ENCODE measurements at regions of chr15 and their contacts with region 1.

Region 1: DNA sequence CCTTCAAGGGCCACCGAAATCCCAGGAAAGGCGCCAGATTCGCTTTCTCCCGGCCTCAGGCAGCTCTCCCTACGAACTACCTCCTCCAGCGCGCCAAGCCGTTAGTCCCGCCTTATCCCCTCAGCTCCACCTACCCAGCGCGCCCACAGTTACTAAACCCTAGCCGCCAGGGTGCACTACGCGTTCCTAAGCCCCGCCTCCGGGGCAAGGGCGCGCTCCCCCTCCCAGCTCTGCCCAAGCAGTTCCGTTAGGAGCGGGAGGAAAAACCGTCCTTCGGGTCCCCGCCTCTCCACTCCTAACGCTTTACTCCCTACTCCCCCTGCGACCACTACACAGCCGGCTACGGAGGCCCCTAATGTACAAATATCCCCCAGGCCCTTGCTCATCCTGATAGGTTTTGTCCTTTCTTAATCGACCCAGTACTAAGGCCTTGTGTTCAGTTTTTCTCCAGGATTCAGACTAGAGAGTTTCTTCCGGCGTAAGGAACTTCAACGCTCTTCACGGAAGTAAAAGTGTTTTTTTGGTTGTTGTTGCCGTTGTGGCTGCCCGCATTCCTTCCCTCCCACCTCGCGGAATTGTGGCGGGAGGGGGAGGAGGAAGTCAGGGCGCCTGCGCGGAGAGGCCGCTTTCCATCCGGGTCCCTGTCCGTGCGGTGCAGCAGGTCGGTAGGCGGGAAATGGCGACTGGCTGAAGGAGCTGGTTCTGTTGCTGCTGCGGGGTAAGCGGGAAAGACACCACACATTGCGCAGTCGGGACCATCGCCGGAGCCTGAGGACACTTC is at the start of gene CTDSPL2:
- DNase-seq: peak; percentile 87 to 98 (median 94)
- ATAC-seq: peak; percentile 98
- H3K4me3 ChIP-seq: peak within 1 kb of the TSS; percentile 94
- H3K4me3 Mint-ChIP-seq: peak within 1 kb of the TSS; percentile 95 to 99 (median 98)
- H3K27ac ChIP-seq: peak within 1 kb of the TSS; percentile 94
- H3K27ac Mint-ChIP-seq: peak within 1 kb of the TSS; percentile 98 to 100 (median 99)
- H3K4me1 ChIP-seq: peaks cover 10% of the 10 kb centered on the region in 2 donors
- H3K4me1 Mint-ChIP-seq: peaks cover 35 to 65% (median 51%) of the 10 kb centered on the region in 7 donors
- H3K27me3 ChIP-seq: no peaks in the 10 kb centered on the region
- H3K27me3 Mint-ChIP-seq: peaks cover 0 to 2% (median 0%) of the 10 kb centered on the region in 5 donors
- total RNA-seq, gene CTDSPL2: 60.3 to 81.8 (median 77.3) TPM

Region 2: DNA sequence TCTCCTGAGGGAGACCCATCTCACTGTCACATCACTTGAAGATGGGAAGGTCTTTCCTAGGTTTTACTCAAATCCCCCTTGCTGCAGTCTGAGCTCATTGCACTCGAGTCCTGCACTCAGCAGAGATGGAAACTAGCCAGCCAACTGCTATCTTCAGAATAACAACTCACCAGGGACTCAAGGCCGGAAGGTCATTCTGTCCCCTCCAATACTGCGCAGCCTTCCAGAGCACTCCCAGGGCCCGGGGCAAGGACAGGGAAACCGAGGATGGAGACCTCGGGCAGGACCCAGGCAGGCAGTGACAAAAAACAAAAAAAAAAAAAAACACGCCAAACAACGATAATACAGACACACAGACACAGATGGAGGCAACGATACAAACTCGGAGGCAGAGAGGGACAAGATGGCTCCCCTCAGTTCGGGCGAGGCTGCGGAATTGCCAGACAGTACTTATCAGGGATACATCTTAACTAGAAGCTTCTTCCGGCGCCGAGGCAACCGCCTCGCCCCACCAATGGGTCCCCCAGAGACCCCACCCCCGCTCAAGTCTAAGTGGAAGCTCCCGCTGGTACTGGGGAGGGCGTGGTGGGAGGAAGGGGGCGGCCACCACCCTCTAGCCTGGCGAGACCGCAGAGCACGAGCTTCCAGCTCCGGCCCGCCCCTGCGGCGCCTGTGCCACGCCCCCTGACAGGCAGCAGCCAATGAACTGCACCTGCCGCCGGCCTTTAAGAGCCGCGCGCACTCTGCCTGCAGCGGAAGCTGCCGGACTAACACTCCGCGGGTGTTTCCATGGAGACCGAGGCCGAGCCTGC is 916.8 kb before region 1 on chr15:
- CTCF ChIA-PET with region 1: no interaction called
- POLR2A ChIA-PET with region 1: no interaction called
- intact Hi-C with region 1: loop called in 1 of 2 experiments (anchors 5 kb)
- DNase-seq: peak; percentile 91 to 96 (median 94)
- ATAC-seq: peak; percentile 97
- H3K4me3 ChIP-seq: peak overlapping the region; percentile 88
- H3K4me3 Mint-ChIP-seq: peak overlapping the region; percentile 89 to 100 (median 94)
- H3K27ac ChIP-seq: peak overlapping the region; percentile 76
- H3K27ac Mint-ChIP-seq: peak overlapping the region; percentile 92 to 99 (median 97)
- H3K4me1 ChIP-seq: peaks cover 14 to 17% of the 10 kb centered on the region in 2 donors
- H3K4me1 Mint-ChIP-seq: peaks cover 14 to 51% (median 28%) of the 10 kb centered on the region in 7 donors
- H3K27me3 ChIP-seq: no peaks in the 10 kb centered on the region
- H3K27me3 Mint-ChIP-seq: peaks cover 0 to 2% (median under 1%) of the 10 kb centered on the region in 5 donors

Region 3: DNA sequence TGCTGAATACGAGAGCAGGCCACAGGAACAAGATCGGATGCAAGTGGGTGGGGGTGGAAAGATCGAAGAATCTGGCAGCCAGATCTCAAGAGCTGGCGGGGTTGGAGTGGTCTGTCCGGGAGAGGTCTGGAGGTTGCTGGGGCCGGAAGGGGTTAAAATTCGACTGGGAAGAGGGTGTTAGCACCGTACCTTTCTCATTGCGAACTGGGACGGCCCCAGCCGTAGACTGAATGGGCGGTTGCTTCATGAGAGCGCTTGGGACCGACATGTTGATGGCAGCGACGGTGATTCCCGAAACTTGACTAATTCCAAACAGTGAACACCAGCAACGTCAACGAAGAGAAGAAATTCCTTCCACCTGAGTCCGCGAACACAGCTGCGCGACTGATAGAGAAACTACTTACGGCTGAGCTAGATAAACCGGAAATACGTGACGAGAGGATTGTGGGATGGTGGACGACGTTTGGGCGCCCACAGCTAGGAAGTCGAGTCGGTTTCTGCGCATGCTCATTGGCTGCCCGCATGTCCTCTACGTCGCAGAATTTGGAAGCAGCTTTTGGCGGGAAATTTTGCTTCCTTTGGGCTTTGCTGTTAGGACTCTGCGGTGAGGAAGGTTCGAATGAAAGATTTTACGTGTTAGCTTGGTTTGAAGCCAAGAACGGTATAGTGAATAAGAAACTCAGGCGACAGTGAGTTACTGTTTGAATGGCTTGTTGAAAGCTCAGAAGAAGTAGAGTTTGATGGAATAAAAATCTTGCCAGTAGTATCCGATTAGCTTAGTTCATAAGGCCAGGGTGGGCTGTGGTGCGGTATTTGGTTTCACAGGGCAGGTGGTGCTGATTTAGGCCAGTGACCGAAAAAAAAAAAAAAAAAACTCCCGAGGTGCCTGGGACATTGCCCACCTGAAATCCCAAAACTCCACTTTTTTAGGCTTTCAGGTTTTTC is 602.6 kb before region 1 on chr15 and contains the start of gene MFAP1:
- CTCF ChIA-PET with region 1: no interaction called
- POLR2A ChIA-PET with region 1: no interaction called
- intact Hi-C with region 1: loop called (anchors 1 to 2 kb)
- DNase-seq: peak; percentile 63 to 94 (median 89)
- ATAC-seq: peak; percentile 94
- H3K4me3 ChIP-seq: peak within 1 kb of the TSS; percentile 100
- H3K4me3 Mint-ChIP-seq: peak within 1 kb of the TSS; percentile 94 to 100 (median 98)
- H3K27ac ChIP-seq: peak within 1 kb of the TSS; percentile 97
- H3K27ac Mint-ChIP-seq: peak within 1 kb of the TSS; percentile 95 to 99 (median 98)
- H3K4me1 ChIP-seq: peaks cover 32 to 34% of the 10 kb centered on the region in 2 donors
- H3K4me1 Mint-ChIP-seq: peaks cover 37 to 81% (median 53%) of the 10 kb centered on the region in 7 donors
- H3K27me3 ChIP-seq: no peaks in the 10 kb centered on the region
- H3K27me3 Mint-ChIP-seq: no peaks in the 10 kb centered on the region
- total RNA-seq, gene MFAP1: 8.5 to 37.3 (median 21.8) TPM

Region 4: GRCh38 chr15:43977072-43977884 is 449.9 kb before region 1 on chr15:
- CTCF ChIA-PET with region 1: no interaction called
- POLR2A ChIA-PET with region 1: no interaction called
- intact Hi-C with region 1: no loop called
- DNase-seq: peak in 1 of 9 donors; percentile 69
- ATAC-seq: no peak
- H3K4me3 ChIP-seq: no peak overlapping the region
- H3K4me3 Mint-ChIP-seq: peak overlapping the region in 2 of 10 donors; percentile 12 to 29
- H3K27ac ChIP-seq: no peak overlapping the region
- H3K27ac Mint-ChIP-seq: peak overlapping the region in 1 of 9 donors; percentile 71
- H3K4me1 ChIP-seq: no peaks in the 10 kb centered on the region
- H3K4me1 Mint-ChIP-seq: peaks cover 0 to 31% (median 8%) of the 10 kb centered on the region in 7 donors
- H3K27me3 ChIP-seq: no peaks in the 10 kb centered on the region
- H3K27me3 Mint-ChIP-seq: peaks cover 9 to 29% (median 15%) of the 10 kb centered on the region in 5 donors

Region 5: GRCh38 chr15:44286814-44287452 is 140.2 kb before region 1 on chr15:
- CTCF ChIA-PET with region 1: interaction called, 4 read pairs
- POLR2A ChIA-PET with region 1: interaction called, 34 read pairs
- intact Hi-C with region 1: loop called (anchors 1 kb)
- DNase-seq: peak in 4 of 9 donors; percentile 9 to 30 (median 19)
- ATAC-seq: no peak
- H3K4me3 ChIP-seq: peak overlapping the region; percentile 85
- H3K4me3 Mint-ChIP-seq: peak overlapping the region; percentile 90 to 99 (median 96)
- H3K27ac ChIP-seq: peak overlapping the region; percentile 86
- H3K27ac Mint-ChIP-seq: peak overlapping the region; percentile 95 to 100 (median 99)
- H3K4me1 ChIP-seq: peaks cover 12 to 13% of the 10 kb centered on the region in 2 donors
- H3K4me1 Mint-ChIP-seq: peaks cover 30 to 50% (median 45%) of the 10 kb centered on the region in 7 donors
- H3K27me3 ChIP-seq: no peaks in the 10 kb centered on the region
- H3K27me3 Mint-ChIP-seq: peaks cover 0 to 17% (median 3%) of the 10 kb centered on the region in 5 donors

Region 6: DNA sequence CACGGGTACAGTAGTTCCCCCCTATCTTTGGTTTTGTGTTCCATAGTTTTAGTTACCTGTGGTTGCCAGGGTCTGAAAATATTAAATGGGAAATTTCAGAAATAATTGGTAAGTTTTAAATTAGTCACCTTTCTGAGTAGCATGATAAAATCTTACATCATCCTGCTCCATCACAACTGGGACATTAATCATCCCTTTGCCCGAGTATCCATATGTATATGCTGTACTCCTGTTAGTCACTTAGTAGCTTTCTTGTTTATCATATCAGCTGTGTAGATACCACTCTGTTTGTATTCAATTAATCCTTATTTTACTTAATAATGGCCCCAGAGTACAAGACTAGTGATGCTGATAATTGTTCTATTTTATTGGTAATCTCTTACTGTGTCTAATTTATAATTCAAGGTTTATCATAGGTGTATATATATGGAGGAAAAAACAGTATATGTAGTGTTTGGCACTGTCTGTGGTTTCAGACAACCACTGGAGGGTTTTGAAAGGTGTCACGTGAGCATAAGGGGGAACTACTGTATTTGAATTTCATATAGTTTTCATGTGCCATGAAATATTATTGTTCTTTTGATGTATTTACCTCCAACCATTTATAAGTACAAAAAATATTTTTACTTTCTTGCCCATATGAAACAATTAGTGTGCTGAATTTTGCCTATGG is 41.7 kb after region 1 on chr15:
- CTCF ChIA-PET with region 1: no interaction called
- POLR2A ChIA-PET with region 1: interaction called, 3 read pairs
- intact Hi-C with region 1: loop called in 1 of 2 experiments (anchors 5 kb)
- DNase-seq: no peak
- ATAC-seq: peak; percentile 32
- H3K4me3 ChIP-seq: no peak overlapping the region
- H3K4me3 Mint-ChIP-seq: peak overlapping the region in 1 of 10 donors; percentile 5
- H3K27ac ChIP-seq: no peak overlapping the region
- H3K27ac Mint-ChIP-seq: no peak overlapping the region
- H3K4me1 ChIP-seq: peaks cover 0 to 9% of the 10 kb centered on the region in 2 donors
- H3K4me1 Mint-ChIP-seq: peaks cover 11 to 37% (median 24%) of the 10 kb centered on the region in 7 donors
- H3K27me3 ChIP-seq: no peaks in the 10 kb centered on the region
- H3K27me3 Mint-ChIP-seq: no peaks in the 10 kb centered on the region

Region 7: GRCh38 chr15:44728576-44729407 is 301.6 kb after region 1 on chr15:
- CTCF ChIA-PET with region 1: no interaction called
- POLR2A ChIA-PET with region 1: no interaction called
- intact Hi-C with region 1: loop called (anchors 5 kb)
- DNase-seq: peak; percentile 75 to 97 (median 96)
- ATAC-seq: peak; percentile 88
- H3K4me3 ChIP-seq: peak overlapping the region; percentile 94
- H3K4me3 Mint-ChIP-seq: peak overlapping the region; percentile 87 to 100 (median 99)
- H3K27ac ChIP-seq: peak overlapping the region; percentile 99
- H3K27ac Mint-ChIP-seq: peak overlapping the region; percentile 98 to 100 (median 100)
- H3K4me1 ChIP-seq: peaks cover 52 to 56% of the 10 kb centered on the region in 2 donors
- H3K4me1 Mint-ChIP-seq: peaks cover 54 to 86% (median 77%) of the 10 kb centered on the region in 7 donors
- H3K27me3 ChIP-seq: no peaks in the 10 kb centered on the region
- H3K27me3 Mint-ChIP-seq: peaks cover 0 to 2% (median 0%) of the 10 kb centered on the region in 5 donors

Region 8: GRCh38 chr15:44788748-44789147 is 361.6 kb after region 1 on chr15:
- CTCF ChIA-PET with region 1: no interaction called
- POLR2A ChIA-PET with region 1: no interaction called
- intact Hi-C with region 1: no loop called
- DNase-seq: peak in 1 of 9 donors; percentile 47
- ATAC-seq: no peak
- H3K4me3 ChIP-seq: no peak overlapping the region
- H3K4me3 Mint-ChIP-seq: peak overlapping the region in 2 of 10 donors; percentile 1 to 30
- H3K27ac ChIP-seq: no peak overlapping the region
- H3K27ac Mint-ChIP-seq: peak overlapping the region in 4 of 9 donors; percentile 2 to 71 (median 14)
- H3K4me1 ChIP-seq: peaks cover 4 to 5% of the 10 kb centered on the region in 2 donors
- H3K4me1 Mint-ChIP-seq: peaks cover 6 to 19% (median 9%) of the 10 kb centered on the region in 7 donors
- H3K27me3 ChIP-seq: no peaks in the 10 kb centered on the region
- H3K27me3 Mint-ChIP-seq: peaks cover 0 to 6% (median 0%) of the 10 kb centered on the region in 5 donors

Region 9: DNA sequence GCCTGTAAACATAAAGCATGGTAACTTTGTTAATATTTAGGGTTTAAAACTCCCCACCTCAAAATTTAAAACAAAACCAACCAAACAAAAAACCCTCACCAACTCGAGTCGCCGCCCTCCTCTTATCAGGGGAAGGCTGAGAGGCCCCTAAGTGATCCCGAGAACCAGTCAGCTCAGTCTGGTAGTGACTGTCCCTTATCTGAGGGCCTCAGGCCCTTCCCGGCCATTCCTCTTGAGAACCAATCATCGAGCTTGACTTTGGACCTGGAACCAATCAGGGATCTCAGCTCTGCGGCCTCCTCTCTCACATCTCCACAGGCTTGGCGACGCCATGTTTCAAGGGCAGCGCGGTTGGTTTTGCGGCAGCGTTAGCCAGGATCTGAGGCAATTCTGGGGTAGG is 529.2 kb after region 1 on chr15 and contains the start of gene TERB2:
- CTCF ChIA-PET with region 1: no interaction called
- POLR2A ChIA-PET with region 1: no interaction called
- intact Hi-C with region 1: no loop called
- DNase-seq: no peak
- ATAC-seq: no peak
- H3K4me3 ChIP-seq: no peak within 1 kb of the TSS
- H3K4me3 Mint-ChIP-seq: no peak within 1 kb of the TSS
- H3K27ac ChIP-seq: no peak within 1 kb of the TSS
- H3K27ac Mint-ChIP-seq: no peak within 1 kb of the TSS
- H3K4me1 ChIP-seq: no peaks in the 10 kb centered on the region
- H3K4me1 Mint-ChIP-seq: no peaks in the 10 kb centered on the region
- H3K27me3 ChIP-seq: no peaks in the 10 kb centered on the region
- H3K27me3 Mint-ChIP-seq: peaks cover 0 to 9% (median 5%) of the 10 kb centered on the region in 5 donors
- total RNA-seq, gene TERB2: not detected

Region 10: GRCh38 chr15:45276831-45277230 is 849.7 kb after region 1 on chr15:
- CTCF ChIA-PET with region 1: no interaction called
- POLR2A ChIA-PET with region 1: no interaction called
- intact Hi-C with region 1: no loop called
- DNase-seq: peak in 6 of 9 donors; percentile 10 to 28 (median 16)
- ATAC-seq: no peak
- H3K4me3 ChIP-seq: no peak overlapping the region
- H3K4me3 Mint-ChIP-seq: no peak overlapping the region
- H3K27ac ChIP-seq: no peak overlapping the region
- H3K27ac Mint-ChIP-seq: no peak overlapping the region
- H3K4me1 ChIP-seq: peaks cover 9 to 12% of the 10 kb centered on the region in 2 donors
- H3K4me1 Mint-ChIP-seq: peaks cover 10 to 34% (median 23%) of the 10 kb centered on the region in 7 donors
- H3K27me3 ChIP-seq: no peaks in the 10 kb centered on the region
- H3K27me3 Mint-ChIP-seq: peaks cover 0 to 2% (median 0%) of the 10 kb centered on the region in 5 donors

Region 11: GRCh38 chr15:45587095-45587860 is 1160.1 kb after region 1 on chr15 and contains the start of gene BLOC1S6:
- CTCF ChIA-PET with region 1: no interaction called
- POLR2A ChIA-PET with region 1: no interaction called
- intact Hi-C with region 1: loop called in 1 of 2 experiments (anchors 5 kb)
- DNase-seq: peak; percentile 81 to 91 (median 87)
- ATAC-seq: peak; percentile 87
- H3K4me3 ChIP-seq: peak within 1 kb of the TSS; percentile 87
- H3K4me3 Mint-ChIP-seq: peak within 1 kb of the TSS; percentile 96 to 100 (median 98)
- H3K27ac ChIP-seq: peak within 1 kb of the TSS; percentile 97
- H3K27ac Mint-ChIP-seq: peak within 1 kb of the TSS; percentile 100
- H3K4me1 ChIP-seq: peaks cover 25 to 26% of the 10 kb centered on the region in 2 donors
- H3K4me1 Mint-ChIP-seq: peaks cover 27 to 55% (median 38%) of the 10 kb centered on the region in 7 donors
- H3K27me3 ChIP-seq: no peaks in the 10 kb centered on the region
- H3K27me3 Mint-ChIP-seq: no peaks in the 10 kb centered on the region
- total RNA-seq, gene BLOC1S6: 34.4 to 63.9 (median 50.9) TPM

Measured in naive thymus-derived CD4-positive, alpha-beta T cell (primary cell).